Endothelial cell of umbilical vein (primary cell): ENCODE measurements at regions of chr10 and their contacts with region 1.

Region 1: GRCh38 chr10:60282771-60283353 is 106.8 kb downstream of the ANK3 start:
- DNase-seq: peak; percentile 85
- H3K4me3 ChIP-seq: peak overlapping the region in 2 of 3 experiments; percentile 25 to 59
- H3K27ac ChIP-seq: peak overlapping the region; percentile 92
- H3K4me1 ChIP-seq: peaks cover 43% of the 10 kb centered on the region
- H3K27me3 ChIP-seq: no peaks in the 10 kb centered on the region
- CTCF ChIP-seq: no peak
- POLR2A ChIP-seq: no peak

Region 2: DNA sequence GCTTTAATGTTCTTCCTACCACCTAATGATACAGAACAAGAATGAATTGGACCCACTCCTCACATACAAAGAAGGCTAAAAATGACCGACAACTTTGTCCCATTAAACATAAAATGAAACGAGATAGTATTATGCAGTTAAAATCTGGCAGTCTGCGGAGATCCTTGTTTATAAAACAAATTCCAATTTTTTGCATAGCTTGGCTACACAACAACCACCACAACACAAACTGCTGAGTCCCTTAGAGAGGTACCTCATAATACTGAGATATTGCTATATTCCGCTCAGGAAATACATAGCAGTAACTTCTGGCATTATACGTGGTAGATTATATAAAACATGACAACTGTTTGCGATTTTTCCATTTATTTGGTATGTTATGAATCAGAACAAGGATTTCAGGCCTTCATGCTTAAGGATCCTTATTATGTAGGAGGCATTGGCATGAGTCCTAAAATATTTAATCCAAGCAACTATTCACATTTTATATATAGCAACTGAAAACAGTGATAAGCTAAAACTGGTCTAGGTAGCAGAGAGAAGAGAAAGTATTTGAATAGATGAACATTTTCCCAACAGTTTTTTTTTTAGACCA is 10.8 kb after region 1 on chr10:
- CTCF ChIA-PET with region 1: interaction called, 11 read pairs
- POLR2A ChIA-PET with region 1: no interaction called
- dilution Hi-C with region 1: no loop called
- intact Hi-C with region 1: no loop called
- DNase-seq: no peak
- H3K4me3 ChIP-seq: no peak overlapping the region
- H3K27ac ChIP-seq: no peak overlapping the region
- H3K4me1 ChIP-seq: no peaks in the 10 kb centered on the region
- H3K27me3 ChIP-seq: no peaks in the 10 kb centered on the region
- CTCF ChIP-seq: no peak
- POLR2A ChIP-seq: no peak

Region 3: GRCh38 chr10:60384708-60385398 is 102.0 kb after region 1 on chr10:
- CTCF ChIA-PET with region 1: interaction called, 3 read pairs
- POLR2A ChIA-PET with region 1: no interaction called
- dilution Hi-C with region 1: no loop called
- intact Hi-C with region 1: loop called (anchors 1 kb)
- DNase-seq: peak; percentile 77
- H3K4me3 ChIP-seq: no peak overlapping the region
- H3K27ac ChIP-seq: peak overlapping the region; percentile 40
- H3K4me1 ChIP-seq: peaks cover 31% of the 10 kb centered on the region
- H3K27me3 ChIP-seq: no peaks in the 10 kb centered on the region
- CTCF ChIP-seq: no peak
- POLR2A ChIP-seq: peak; percentile 71

Region 4: DNA sequence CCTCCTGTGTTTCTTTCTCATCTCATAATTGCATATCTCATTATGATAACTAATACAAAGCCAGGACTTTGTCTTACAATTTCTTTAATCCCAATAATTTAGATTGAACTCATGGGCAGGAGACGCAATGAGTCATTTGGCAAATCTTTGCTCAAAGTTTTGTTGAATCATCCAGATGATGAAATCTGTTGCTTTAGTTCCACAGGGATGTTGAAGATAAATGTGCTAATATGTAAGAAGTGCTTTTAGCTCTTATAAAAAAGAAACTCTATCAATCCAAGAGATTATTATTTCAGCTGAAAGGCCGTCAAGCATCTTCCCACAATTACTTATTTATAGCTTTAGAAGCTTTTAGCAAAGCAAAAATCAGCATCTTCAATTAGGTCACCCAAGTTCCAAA is 143.5 kb after region 1 on chr10:
- CTCF ChIA-PET with region 1: interaction called, 7 read pairs
- POLR2A ChIA-PET with region 1: no interaction called
- dilution Hi-C with region 1: no loop called
- intact Hi-C with region 1: loop called (anchors 1 kb)
- DNase-seq: peak; percentile 71
- H3K4me3 ChIP-seq: no peak overlapping the region
- H3K27ac ChIP-seq: peak overlapping the region; percentile 85
- H3K4me1 ChIP-seq: peaks cover 62% of the 10 kb centered on the region
- H3K27me3 ChIP-seq: no peaks in the 10 kb centered on the region
- CTCF ChIP-seq: no peak
- POLR2A ChIP-seq: no peak